ENCODE measurements at regions of chr14 and their contacts with region 1.

Region 1: DNA sequence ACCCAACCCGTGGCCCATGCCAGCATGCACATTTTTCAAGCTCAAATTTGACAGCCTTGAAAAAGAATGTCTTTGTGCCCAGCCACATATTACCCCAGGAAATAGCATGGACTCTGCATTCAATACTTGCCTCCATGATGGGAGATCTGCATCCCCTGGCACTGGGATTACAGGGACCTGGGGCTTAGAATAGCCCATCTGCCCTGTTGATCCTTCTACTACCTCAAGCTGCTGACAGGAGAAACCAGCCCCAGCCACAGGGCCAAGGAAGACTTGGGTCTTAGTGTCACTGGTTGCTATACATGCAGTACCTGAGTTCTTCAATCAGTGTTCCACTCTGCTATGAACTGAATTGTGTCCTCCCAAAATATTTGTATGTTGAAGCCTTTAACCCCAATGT is 85.3 kb downstream of the LRRC74A start:
- DNase-seq: no peak
- H3K4me3 Mint-ChIP-seq: no peak overlapping the region
- H3K27ac Mint-ChIP-seq: no peak overlapping the region
- H3K4me1 Mint-ChIP-seq: peaks cover 69% of the 10 kb centered on the region
- H3K27me3 Mint-ChIP-seq: no peaks in the 10 kb centered on the region

Region 2: GRCh38 chr14:76525106-76525821 is 386.2 kb before region 1 on chr14:
- CTCF ChIA-PET with region 1: no interaction called
- POLR2A ChIA-PET with region 1: no interaction called
- DNase-seq: no peak
- H3K4me3 Mint-ChIP-seq: no peak overlapping the region
- H3K27ac Mint-ChIP-seq: no peak overlapping the region
- H3K4me1 Mint-ChIP-seq: no peaks in the 10 kb centered on the region
- H3K27me3 Mint-ChIP-seq: peaks cover 21% of the 10 kb centered on the region

Region 3: GRCh38 chr14:76782115-76782884 is 129.2 kb before region 1 on chr14:
- CTCF ChIA-PET with region 1: no interaction called
- POLR2A ChIA-PET with region 1: no interaction called
- DNase-seq: no peak
- H3K4me3 Mint-ChIP-seq: no peak overlapping the region
- H3K27ac Mint-ChIP-seq: peak overlapping the region; percentile 43
- H3K4me1 Mint-ChIP-seq: peaks cover 50% of the 10 kb centered on the region
- H3K27me3 Mint-ChIP-seq: no peaks in the 10 kb centered on the region

Region 4: DNA sequence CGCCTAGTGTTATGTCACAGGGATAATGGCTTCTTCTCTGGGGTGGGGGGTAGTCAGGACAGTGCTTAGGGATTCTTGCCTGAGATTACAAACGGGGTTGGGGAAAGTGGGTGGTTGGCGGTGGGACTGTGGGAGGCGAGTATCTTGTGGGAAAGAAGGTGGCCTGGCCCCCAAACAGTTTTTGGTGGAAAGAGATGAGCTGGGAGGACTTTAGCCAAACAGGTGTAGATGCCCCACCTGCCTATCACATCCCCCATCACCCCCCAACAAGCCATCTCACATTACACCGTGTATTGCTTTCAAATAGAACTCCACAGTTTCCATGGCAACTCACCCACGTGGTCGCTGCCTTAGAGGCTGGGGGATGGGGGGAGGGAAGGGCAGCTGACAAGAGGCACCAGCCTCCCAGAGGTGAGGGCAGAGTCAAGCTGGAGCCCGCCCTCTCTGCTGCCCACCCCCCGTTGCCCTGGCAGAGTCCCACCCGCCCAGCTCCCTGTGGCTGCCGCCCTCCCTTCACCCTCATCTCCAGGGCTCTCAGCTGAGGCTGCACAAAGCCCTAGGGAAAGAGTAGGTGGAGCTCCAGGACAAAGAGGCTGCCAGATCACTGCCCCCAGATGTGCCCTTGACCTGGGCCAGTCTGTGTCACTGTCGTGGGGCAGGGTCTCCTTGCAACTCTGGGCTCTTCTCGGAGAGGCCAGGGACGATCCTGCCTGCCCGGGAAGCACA is 13.1 kb after region 1 on chr14:
- CTCF ChIA-PET with region 1: interaction called, 33 read pairs
- POLR2A ChIA-PET with region 1: no interaction called
- DNase-seq: peak; percentile 64
- H3K4me3 Mint-ChIP-seq: no peak overlapping the region
- H3K27ac Mint-ChIP-seq: peak overlapping the region; percentile 91
- H3K4me1 Mint-ChIP-seq: peaks cover 93% of the 10 kb centered on the region
- H3K27me3 Mint-ChIP-seq: no peaks in the 10 kb centered on the region

Region 5: GRCh38 chr14:76929927-76930326 is 18.5 kb after region 1 on chr14:
- CTCF ChIA-PET with region 1: interaction called, 33 read pairs
- POLR2A ChIA-PET with region 1: no interaction called
- DNase-seq: peak; percentile 88
- H3K4me3 Mint-ChIP-seq: peak overlapping the region; percentile 52
- H3K27ac Mint-ChIP-seq: peak overlapping the region; percentile 91
- H3K4me1 Mint-ChIP-seq: peaks cover 85% of the 10 kb centered on the region
- H3K27me3 Mint-ChIP-seq: no peaks in the 10 kb centered on the region

Region 6: DNA sequence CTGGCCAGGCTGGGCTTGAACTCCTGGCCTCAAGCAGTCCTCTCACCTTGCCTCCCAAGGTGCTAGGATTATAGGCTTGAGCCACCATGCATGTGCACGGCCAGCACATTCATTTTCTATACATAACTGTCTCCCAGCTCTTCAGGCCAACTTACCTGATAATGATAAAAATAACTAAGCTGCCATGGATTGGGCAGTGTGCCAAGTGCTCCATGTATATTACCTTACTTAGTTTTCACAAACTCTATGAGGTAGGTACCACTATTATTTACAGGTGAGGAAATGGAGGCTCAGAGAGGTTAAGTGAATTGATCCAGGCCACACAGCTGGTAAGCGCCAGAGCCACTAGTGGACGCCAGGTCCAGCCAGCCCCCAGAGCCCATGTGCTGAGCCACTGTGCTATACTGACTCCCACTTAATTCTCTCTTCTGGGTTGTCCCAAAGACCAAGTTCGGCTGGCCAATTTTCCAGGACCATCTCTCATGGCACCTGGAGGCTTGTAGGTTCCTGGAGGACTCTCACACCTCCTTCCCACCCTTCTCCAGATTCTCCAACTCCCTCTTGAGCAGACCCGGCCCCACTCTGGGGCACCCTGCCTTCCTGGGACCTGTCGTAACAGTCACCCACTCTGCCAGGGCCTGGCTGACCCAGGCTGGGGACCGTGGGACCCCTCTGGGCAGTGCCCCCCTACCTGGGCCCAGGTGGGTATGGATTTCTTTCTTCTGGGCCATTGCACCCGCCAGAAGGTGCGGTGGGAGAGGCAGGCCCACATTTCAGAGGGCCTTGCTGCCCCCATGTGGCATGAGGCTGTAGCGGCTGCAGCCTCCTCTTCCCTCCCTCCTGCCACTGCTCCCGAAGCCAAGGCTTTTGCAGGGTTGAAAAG is 156.4 kb after region 1 on chr14:
- CTCF ChIA-PET with region 1: interaction called, 25 read pairs
- POLR2A ChIA-PET with region 1: no interaction called
- DNase-seq: peak; percentile 61
- H3K4me3 Mint-ChIP-seq: no peak overlapping the region
- H3K27ac Mint-ChIP-seq: no peak overlapping the region
- H3K4me1 Mint-ChIP-seq: peaks cover 2% of the 10 kb centered on the region
- H3K27me3 Mint-ChIP-seq: peaks cover 5% of the 10 kb centered on the region

Region 7: DNA sequence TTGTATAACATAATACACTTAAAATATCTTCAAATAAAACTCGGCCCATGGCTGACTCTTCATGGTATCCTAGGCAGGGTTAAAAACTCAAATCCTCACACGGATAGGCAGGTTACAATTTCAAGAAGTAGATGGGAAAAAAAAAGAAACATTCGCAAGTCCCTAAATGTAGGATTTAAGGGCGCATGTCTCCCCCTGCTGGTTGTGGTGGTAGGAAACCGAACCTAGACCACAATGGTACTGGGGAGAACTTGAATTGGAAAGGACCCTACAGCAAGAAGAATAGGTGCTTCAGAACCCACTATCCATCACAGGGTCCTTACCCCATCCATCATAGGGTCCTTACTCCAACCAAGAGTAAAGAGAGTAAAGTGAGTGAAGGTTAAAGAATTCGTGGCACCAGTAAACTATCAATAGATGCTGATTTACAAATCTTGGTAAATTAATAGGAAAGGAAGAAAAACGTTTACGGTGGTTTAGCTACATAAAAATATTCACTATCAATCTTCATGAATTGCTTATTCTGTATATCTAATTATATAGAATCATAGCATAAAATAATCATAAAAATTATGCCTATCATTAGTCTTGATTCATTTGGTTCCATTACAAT is 183.3 kb after region 1 on chr14:
- CTCF ChIA-PET with region 1: no interaction called
- POLR2A ChIA-PET with region 1: no interaction called
- DNase-seq: peak; percentile 86
- H3K4me3 Mint-ChIP-seq: no peak overlapping the region
- H3K27ac Mint-ChIP-seq: no peak overlapping the region
- H3K4me1 Mint-ChIP-seq: peaks cover 36% of the 10 kb centered on the region
- H3K27me3 Mint-ChIP-seq: peaks cover 8% of the 10 kb centered on the region

Region 8: GRCh38 chr14:77124345-77125280 is 213.1 kb after region 1 on chr14:
- CTCF ChIA-PET with region 1: no interaction called
- POLR2A ChIA-PET with region 1: no interaction called
- DNase-seq: peak; percentile 54
- H3K4me3 Mint-ChIP-seq: peak overlapping the region; percentile 60
- H3K27ac Mint-ChIP-seq: no peak overlapping the region
- H3K4me1 Mint-ChIP-seq: peaks cover 41% of the 10 kb centered on the region
- H3K27me3 Mint-ChIP-seq: peaks cover 28% of the 10 kb centered on the region

Measured in activated CD4-positive, alpha-beta T cell treated with anti-CD3 and anti-CD28 coated beads, Interleukin-2, amount 10 ng/mL, durations not matched to agents 7 days and 5 days (primary cell).